ENCODE measurements at regions of chr2 and their contacts with region 1.

Region 1: DNA sequence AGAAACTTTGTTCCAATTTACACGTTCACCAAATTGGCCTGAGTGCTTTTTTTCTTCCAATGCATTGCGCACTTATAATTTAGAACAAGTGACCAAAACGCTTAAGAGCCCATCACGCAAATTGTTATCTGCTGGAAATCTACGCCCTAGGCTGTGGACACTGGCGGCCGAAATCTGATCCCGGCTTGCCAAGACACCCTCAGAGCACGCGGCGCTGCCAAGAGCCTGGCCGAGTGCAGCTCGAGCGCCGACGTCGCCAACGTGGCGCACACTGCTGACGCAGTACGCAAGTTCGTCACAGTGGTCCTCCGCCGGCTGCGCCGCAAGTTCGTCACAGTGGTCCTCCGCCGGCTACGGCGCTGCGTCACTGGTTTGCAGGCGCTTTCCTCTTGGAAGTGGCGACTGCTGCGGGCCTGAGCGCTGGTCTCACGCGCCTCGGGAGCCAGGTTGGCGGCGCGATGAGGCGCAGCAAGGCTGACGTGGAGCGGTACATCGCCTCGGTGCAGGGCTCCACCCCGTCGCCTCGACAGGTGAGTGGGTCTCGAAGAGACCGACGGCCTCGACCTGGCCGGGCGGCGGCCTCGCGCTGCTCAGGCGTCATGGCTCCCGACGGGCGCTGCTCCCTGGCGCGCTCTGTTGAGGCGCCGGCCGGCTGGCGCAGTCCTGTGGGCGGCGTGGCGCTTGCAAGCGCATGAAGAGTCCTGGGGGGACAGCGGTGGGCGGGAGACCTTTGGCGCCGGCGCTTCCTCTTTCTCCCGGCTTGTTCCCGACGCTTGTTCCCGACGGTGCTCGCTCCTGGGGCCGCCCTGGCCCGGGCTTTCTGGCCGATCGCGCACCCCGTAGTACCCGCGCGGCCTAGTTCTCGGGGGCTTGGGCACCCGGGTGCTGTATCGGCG is at the start of gene RANBP2:
- DNase-seq: peak; percentile 91
- ATAC-seq: peak; percentile 94
- H3K4me3 Mint-ChIP-seq: peak within 1 kb of the TSS; percentile 93
- H3K27ac Mint-ChIP-seq: peak within 1 kb of the TSS; percentile 97
- H3K4me1 Mint-ChIP-seq: peaks cover 24% of the 10 kb centered on the region
- H3K27me3 Mint-ChIP-seq: no peaks in the 10 kb centered on the region
- CTCF ChIP-seq: no peak
- total RNA-seq, gene RANBP2: 66.7 and 68.5 TPM in 2 replicates

Region 2: GRCh38 chr2:108448678-108449493 is 270.5 kb before region 1 on chr2 and contains the start of gene GCC2:
- CTCF ChIA-PET with region 1: no interaction called
- POLR2A ChIA-PET with region 1: interaction called, 3 read pairs
- intact Hi-C with region 1: loop called (anchors 1 kb)
- DNase-seq: peak; percentile 96
- ATAC-seq: peak; percentile 96
- H3K4me3 Mint-ChIP-seq: peak within 1 kb of the TSS; percentile 98
- H3K27ac Mint-ChIP-seq: peak within 1 kb of the TSS; percentile 96
- H3K4me1 Mint-ChIP-seq: peaks cover 53% of the 10 kb centered on the region
- H3K27me3 Mint-ChIP-seq: no peaks in the 10 kb centered on the region
- CTCF ChIP-seq: no peak
- total RNA-seq, gene GCC2: 44.0 and 53.8 TPM in 2 replicates

Region 3: DNA sequence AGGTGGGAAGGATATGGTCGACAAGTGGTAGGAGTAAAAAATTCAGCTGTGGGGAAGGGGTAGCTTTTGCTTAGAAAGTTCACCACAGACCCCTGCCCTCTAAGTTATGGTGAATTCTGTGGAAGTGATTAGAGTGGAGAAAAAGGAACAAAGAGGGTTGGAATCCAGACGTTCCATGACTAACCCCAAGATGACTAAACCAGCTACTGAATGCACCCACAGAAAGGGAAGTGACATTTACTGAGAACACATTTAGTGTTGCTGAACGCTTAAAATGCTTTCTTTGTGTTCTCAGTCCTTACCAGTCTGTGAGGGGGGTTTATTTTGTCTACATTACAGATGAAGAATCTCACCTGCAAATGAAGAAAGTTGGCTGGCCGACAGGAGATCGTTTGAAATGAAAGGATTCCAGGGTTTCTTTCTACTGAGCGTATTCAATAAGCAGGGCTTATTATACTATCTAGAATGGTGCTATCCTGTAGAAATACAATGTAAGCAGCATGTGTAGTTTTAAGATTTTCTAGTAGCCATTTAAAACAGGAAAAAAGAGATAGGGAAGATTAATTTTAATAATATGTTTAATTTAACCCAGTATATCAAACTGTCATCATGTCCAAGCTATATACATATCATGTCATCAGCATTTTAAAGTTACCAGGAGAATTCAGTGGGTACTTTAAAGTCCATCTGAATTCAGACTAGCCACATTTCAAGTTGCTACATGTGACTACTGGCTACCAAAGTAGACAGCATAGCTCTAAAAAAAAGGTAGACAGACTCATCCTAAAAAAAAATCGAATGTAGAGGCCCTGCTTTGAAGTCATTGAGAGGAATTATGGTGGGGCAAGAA is 125.0 kb before region 1 on chr2:
- CTCF ChIA-PET with region 1: no interaction called
- POLR2A ChIA-PET with region 1: no interaction called
- intact Hi-C with region 1: loop called (anchors 5 kb)
- DNase-seq: no peak
- ATAC-seq: peak; percentile 75
- H3K4me3 Mint-ChIP-seq: peak overlapping the region; percentile 64
- H3K27ac Mint-ChIP-seq: peak overlapping the region; percentile 83
- H3K4me1 Mint-ChIP-seq: peaks cover 78% of the 10 kb centered on the region
- H3K27me3 Mint-ChIP-seq: no peaks in the 10 kb centered on the region
- CTCF ChIP-seq: no peak

Region 4: DNA sequence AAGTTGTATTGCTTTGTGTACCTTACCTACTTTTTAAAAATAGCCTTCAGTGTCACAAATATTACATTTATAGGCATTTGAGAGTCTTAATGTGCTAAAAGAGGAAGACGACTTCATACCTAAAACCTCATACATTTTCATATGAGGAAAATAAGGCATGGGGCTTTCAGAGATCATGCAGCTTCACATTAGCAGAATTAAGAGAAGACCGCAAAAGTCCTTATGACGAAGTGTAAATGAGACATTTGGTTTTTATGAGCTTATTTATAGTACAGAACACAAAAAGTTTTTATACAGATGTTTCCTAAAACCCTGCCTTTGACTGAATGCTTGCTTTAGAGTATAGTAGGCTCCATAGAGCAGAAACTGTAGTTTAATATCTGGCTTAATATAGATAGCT is 57.1 kb after region 1 on chr2:
- CTCF ChIA-PET with region 1: no interaction called
- POLR2A ChIA-PET with region 1: interaction called, 3 read pairs
- intact Hi-C with region 1: loop called (anchors 1 kb)
- DNase-seq: no peak
- ATAC-seq: peak; percentile 85
- H3K4me3 Mint-ChIP-seq: peak overlapping the region; percentile 65
- H3K27ac Mint-ChIP-seq: peak overlapping the region; percentile 85
- H3K4me1 Mint-ChIP-seq: peaks cover 47% of the 10 kb centered on the region
- H3K27me3 Mint-ChIP-seq: no peaks in the 10 kb centered on the region
- CTCF ChIP-seq: no peak

Region 5: GRCh38 chr2:108786354-108787199 is 67.2 kb after region 1 on chr2 and contains the start of gene CCDC138:
- CTCF ChIA-PET with region 1: no interaction called
- POLR2A ChIA-PET with region 1: interaction called, 3 read pairs
- intact Hi-C with region 1: loop called (anchors 1 kb)
- DNase-seq: peak; percentile 92
- ATAC-seq: peak; percentile 97
- H3K4me3 Mint-ChIP-seq: peak within 1 kb of the TSS; percentile 99
- H3K27ac Mint-ChIP-seq: peak within 1 kb of the TSS; percentile 96
- H3K4me1 Mint-ChIP-seq: peaks cover 23% of the 10 kb centered on the region
- H3K27me3 Mint-ChIP-seq: no peaks in the 10 kb centered on the region
- CTCF ChIP-seq: no peak
- total RNA-seq, gene CCDC138: 10.3 and 10.6 TPM in 2 replicates